Naive thymus-derived CD8-positive, alpha-beta T cell (primary cell): ENCODE measurements at regions of chr12 and their contacts with region 1.

Region 1: GRCh38 chr12:121579981-121580868 is 598 bp downstream of the KDM2B start:
- DNase-seq: peak; percentile 59 to 88 (median 70)
- ATAC-seq: peak; percentile 65 to 66
- H3K4me3 Mint-ChIP-seq: peak overlapping the region; percentile 95 to 99 (median 97)
- H3K27ac Mint-ChIP-seq: peak overlapping the region; percentile 91 to 100 (median 99)
- H3K4me1 Mint-ChIP-seq: peaks cover 20 to 45% (median 36%) of the 10 kb centered on the region in 4 donors
- H3K27me3 Mint-ChIP-seq: no peaks in the 10 kb centered on the region

Region 2: GRCh38 chr12:121423682-121424623 is 156.3 kb before region 1 on chr12:
- POLR2A ChIA-PET with region 1: no interaction called
- DNase-seq: no peak
- ATAC-seq: no peak
- H3K4me3 Mint-ChIP-seq: no peak overlapping the region
- H3K27ac Mint-ChIP-seq: peak overlapping the region in 8 of 10 donors; percentile 2 to 77 (median 47)
- H3K4me1 Mint-ChIP-seq: peaks cover 6 to 14% (median 11%) of the 10 kb centered on the region in 4 donors
- H3K27me3 Mint-ChIP-seq: no peaks in the 10 kb centered on the region

Region 3: GRCh38 chr12:121452340-121452984 is 127.8 kb before region 1 on chr12:
- POLR2A ChIA-PET with region 1: no interaction called
- DNase-seq: no peak
- ATAC-seq: no peak
- H3K4me3 Mint-ChIP-seq: no peak overlapping the region
- H3K27ac Mint-ChIP-seq: peak overlapping the region in 3 of 10 donors; percentile 58 to 69 (median 63)
- H3K4me1 Mint-ChIP-seq: peaks cover 25 to 51% (median 50%) of the 10 kb centered on the region in 4 donors
- H3K27me3 Mint-ChIP-seq: no peaks in the 10 kb centered on the region

Region 4: GRCh38 chr12:121520586-121521086 is 59.6 kb before region 1 on chr12:
- POLR2A ChIA-PET with region 1: no interaction called
- DNase-seq: no peak
- ATAC-seq: no peak
- H3K4me3 Mint-ChIP-seq: no peak overlapping the region
- H3K27ac Mint-ChIP-seq: no peak overlapping the region
- H3K4me1 Mint-ChIP-seq: peaks cover 3 to 8% (median 6%) of the 10 kb centered on the region in 4 donors
- H3K27me3 Mint-ChIP-seq: no peaks in the 10 kb centered on the region

Region 5: DNA sequence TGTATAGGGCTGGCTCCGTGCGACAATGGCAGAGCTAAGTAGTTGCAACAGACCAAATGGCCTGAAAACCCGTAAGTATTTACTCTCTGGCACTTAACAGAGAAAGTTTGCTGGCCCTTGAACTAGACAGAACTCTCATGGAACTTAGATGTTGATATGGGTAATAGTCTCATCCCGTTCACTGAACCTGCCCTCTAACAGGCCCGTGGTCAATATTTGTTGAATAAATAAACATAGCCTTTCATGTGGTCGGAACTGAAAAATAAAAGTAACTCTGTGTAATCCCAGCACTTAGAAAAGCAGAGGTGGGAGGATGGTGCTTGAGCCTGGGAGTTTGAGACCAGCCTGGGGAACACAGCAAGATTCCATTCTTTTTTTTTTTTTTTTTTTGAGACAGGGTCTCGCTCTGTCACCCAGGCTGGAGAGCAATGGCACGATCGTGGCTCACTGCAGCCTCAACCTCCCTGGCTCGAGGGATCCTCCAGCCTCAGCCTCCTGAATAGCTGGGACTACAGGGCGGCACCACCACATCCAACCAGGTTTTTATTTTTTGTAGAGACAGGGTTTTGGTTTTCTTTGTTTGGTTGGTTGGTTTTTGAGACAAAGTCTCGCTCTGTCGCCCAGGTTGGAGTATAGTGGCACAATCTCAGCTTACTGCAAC is 29.1 kb before region 1 on chr12:
- POLR2A ChIA-PET with region 1: interaction called, 13 read pairs
- DNase-seq: no peak
- ATAC-seq: no peak
- H3K4me3 Mint-ChIP-seq: no peak overlapping the region
- H3K27ac Mint-ChIP-seq: peak overlapping the region in 2 of 10 donors; percentile 32 to 89
- H3K4me1 Mint-ChIP-seq: peaks cover 0 to 12% (median 3%) of the 10 kb centered on the region in 4 donors
- H3K27me3 Mint-ChIP-seq: no peaks in the 10 kb centered on the region

Region 6: DNA sequence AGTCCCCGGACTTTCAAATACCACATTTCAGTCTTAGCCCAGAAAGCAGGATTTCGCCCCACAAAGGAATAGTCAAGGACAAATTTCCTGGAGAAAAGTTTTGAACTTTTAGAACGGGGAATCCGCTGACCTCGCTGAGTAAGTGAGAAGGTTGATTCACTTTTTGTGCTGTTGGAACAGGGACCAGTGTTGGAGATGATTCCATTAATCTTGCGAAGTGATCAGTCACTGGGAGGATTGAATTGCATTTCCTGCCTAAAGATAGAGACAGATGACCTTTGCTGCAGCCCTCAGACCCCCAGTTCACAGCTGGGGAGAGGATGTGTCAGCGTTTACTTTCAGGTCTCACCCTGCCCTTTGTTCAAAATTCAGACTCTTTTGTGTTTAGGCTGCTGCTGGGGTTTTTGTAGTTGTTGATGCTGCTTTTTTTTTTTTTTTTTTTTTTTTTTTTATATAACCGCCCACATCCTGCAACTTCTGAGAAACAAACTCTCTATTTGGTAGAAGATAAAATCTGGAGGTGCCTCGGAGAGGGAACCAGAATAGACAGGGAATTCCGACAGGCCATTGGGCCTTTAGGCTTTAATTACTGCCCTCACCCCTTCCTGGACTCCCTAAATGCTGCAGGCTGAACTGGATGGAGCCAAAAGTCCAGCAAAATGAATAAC is 10.4 kb after region 1 on chr12:
- POLR2A ChIA-PET with region 1: interaction called, 146 read pairs
- DNase-seq: peak; percentile 25 to 92 (median 70)
- ATAC-seq: peak; percentile 72 to 80
- H3K4me3 Mint-ChIP-seq: peak overlapping the region; percentile 65 to 91 (median 89)
- H3K27ac Mint-ChIP-seq: peak overlapping the region; percentile 95 to 99 (median 98)
- H3K4me1 Mint-ChIP-seq: peaks cover 13 to 40% (median 40%) of the 10 kb centered on the region in 4 donors
- H3K27me3 Mint-ChIP-seq: peaks cover 0 to 2% (median 0%) of the 10 kb centered on the region in 5 donors

Region 7: GRCh38 chr12:121678716-121679580 is 98.7 kb after region 1 on chr12:
- POLR2A ChIA-PET with region 1: interaction called, 11 read pairs
- DNase-seq: no peak
- ATAC-seq: no peak
- H3K4me3 Mint-ChIP-seq: peak overlapping the region in 1 of 10 donors; percentile 31
- H3K27ac Mint-ChIP-seq: peak overlapping the region in 7 of 10 donors; percentile 7 to 96 (median 59)
- H3K4me1 Mint-ChIP-seq: peaks cover 4 to 10% (median 7%) of the 10 kb centered on the region in 4 donors
- H3K27me3 Mint-ChIP-seq: no peaks in the 10 kb centered on the region